ENCODE measurements at regions of chr2 and their contacts with region 1.

Region 1: GRCh38 chr2:60550178-60550983 is 3.1 kb downstream of the BCL11A start:
- DNase-seq: peak; percentile 71
- H3K4me3 ChIP-seq: peak overlapping the region; percentile 79
- H3K27ac ChIP-seq: peak overlapping the region; percentile 31
- H3K27me3 ChIP-seq: peaks cover 7% of the 10 kb centered on the region
- CTCF ChIP-seq: peak; percentile 77

Region 2: GRCh38 chr2:59025157-59025757 is 1525.1 kb before region 1 on chr2:
- CTCF ChIA-PET with region 1: interaction called, 12 read pairs
- POLR2A ChIA-PET with region 1: no interaction called
- DNase-seq: no peak
- H3K4me3 ChIP-seq: no peak overlapping the region
- H3K27ac ChIP-seq: no peak overlapping the region
- H3K27me3 ChIP-seq: no peaks in the 10 kb centered on the region
- CTCF ChIP-seq: peak; percentile 88

Region 3: GRCh38 chr2:60317844-60318243 is 232.5 kb before region 1 on chr2:
- CTCF ChIA-PET with region 1: no interaction called
- POLR2A ChIA-PET with region 1: no interaction called
- DNase-seq: no peak
- H3K4me3 ChIP-seq: no peak overlapping the region
- H3K27ac ChIP-seq: no peak overlapping the region
- H3K27me3 ChIP-seq: peaks cover 8% of the 10 kb centered on the region
- CTCF ChIP-seq: no peak

Region 4: GRCh38 chr2:60498127-60498815 is 52.1 kb before region 1 on chr2:
- CTCF ChIA-PET with region 1: interaction called, 11 read pairs
- POLR2A ChIA-PET with region 1: interaction called, 3 read pairs
- DNase-seq: no peak
- H3K4me3 ChIP-seq: no peak overlapping the region
- H3K27ac ChIP-seq: no peak overlapping the region
- H3K27me3 ChIP-seq: no peaks in the 10 kb centered on the region
- CTCF ChIP-seq: no peak

Region 5: DNA sequence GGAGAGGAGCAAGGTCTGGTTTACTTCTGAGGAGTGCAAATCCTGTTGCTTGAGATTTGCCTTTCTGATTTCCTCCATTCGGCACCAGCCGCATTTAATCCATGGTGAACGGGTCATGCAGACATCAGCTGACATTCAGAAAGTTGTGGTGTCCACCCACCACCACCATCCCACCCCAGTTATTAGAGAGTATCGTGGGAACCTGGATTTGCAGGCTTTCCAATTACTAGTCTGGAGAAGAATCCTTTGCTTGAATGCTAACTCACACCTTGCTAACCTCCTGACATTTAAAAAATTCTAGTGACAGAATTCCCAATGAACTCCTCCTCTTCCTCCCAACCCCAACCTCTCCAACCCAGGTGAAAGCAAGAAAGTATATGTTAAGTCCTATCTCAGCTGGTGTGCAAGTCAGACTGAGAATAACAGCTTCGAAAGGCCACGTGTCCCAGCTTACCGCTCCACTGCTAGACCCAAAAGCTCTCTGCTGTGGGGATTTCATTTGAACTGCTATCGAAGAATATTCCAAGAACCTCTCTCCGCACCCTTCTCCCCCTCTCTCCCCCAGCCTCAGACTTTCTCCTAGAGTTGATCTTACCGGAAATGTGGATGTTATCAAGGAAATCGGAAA is 14.6 kb before region 1 on chr2:
- CTCF ChIA-PET with region 1: interaction called, 28 read pairs
- POLR2A ChIA-PET with region 1: interaction called, 5 read pairs
- DNase-seq: no peak
- H3K4me3 ChIP-seq: no peak overlapping the region
- H3K27ac ChIP-seq: no peak overlapping the region
- H3K27me3 ChIP-seq: no peaks in the 10 kb centered on the region
- CTCF ChIP-seq: no peak

Region 6: DNA sequence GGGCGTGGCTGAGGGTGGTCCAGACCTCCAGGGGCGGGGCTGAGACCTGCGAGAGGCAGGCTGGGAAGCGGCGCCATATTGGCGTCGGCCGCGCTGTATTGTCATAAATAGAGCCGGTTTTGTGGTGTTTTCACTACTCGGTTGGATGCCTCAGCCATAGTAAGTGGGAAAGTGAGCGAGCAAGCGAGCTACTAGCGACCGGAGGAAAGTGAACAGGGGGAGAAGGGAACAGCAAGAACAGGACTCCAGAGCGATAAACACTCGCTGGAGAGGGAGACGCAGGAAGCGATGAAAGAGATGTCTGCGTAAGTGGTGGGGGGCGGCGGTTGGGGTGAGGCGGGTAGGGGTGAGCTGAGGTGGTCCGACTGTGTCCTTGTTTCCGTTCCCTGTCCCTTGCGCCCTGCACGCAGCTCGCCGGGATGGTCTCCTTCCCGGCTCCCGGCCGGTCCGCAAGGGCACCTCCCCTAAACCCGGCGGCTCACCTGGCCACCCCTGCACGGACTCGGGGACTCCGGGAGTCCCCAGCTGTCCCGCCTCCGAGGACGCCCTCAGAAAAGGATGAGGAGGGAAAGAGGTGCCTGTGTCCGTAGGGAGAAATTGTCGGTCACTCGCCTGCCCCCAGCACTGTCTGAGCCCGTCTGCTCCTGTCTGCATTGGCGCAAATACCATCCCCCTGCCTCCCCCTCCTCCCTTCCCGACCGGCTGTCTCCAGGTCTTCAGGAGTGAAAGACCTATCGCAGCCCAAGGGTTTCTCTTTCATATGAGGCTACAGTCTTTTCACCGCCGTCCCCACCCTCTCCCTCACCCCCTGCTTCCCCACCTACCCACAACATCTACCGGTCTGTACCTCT is 206.0 kb after region 1 on chr2 and contains the start of gene PAPOLG:
- CTCF ChIA-PET with region 1: no interaction called
- POLR2A ChIA-PET with region 1: interaction called, 11 read pairs
- DNase-seq: peak; percentile 74
- H3K4me3 ChIP-seq: peak within 1 kb of the TSS; percentile 95
- H3K27ac ChIP-seq: peak within 1 kb of the TSS; percentile 70
- H3K27me3 ChIP-seq: no peaks in the 10 kb centered on the region
- CTCF ChIP-seq: no peak
- polyA plus RNA-seq, gene PAPOLG: 10.3 and 15.3 TPM in 2 replicates